Activated naive CD4-positive, alpha-beta T cell treated with anti-CD3 and anti-CD28 coated beads for 36 hours (primary cell): ENCODE measurements at regions of chr5 and their contacts with region 1.

Region 1: DNA sequence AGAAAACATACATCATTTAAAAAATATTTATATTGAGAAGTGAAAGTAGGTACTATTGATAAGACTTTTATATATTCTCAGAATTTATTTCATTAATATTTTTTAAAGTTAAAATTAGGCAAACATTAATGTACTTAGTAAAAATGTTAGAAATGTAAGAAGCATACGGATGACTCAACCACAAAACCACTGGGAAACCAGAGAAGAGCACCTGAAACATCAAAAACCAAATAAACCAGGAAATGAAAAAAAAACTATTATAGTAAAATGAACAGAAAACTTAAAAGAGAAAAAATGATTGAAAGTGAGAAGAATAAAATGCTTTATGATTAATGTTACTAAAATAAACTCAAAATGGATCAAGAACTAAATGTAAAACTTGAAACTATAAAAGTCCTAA is 233.2 kb upstream of the DAB2 start:
- DNase-seq: peak; percentile 11
- H3K4me3 Mint-ChIP-seq: no peak overlapping the region
- H3K27ac Mint-ChIP-seq: no peak overlapping the region
- H3K4me1 Mint-ChIP-seq: peaks cover 25% of the 10 kb centered on the region
- H3K27me3 Mint-ChIP-seq: peaks cover 14% of the 10 kb centered on the region

Region 2: GRCh38 chr5:39578887-39579497 is 79.0 kb before region 1 on chr5:
- CTCF ChIA-PET with region 1: no interaction called
- intact Hi-C with region 1: loop called (anchors 5 kb)
- DNase-seq: no peak
- H3K4me3 Mint-ChIP-seq: no peak overlapping the region
- H3K27ac Mint-ChIP-seq: no peak overlapping the region
- H3K4me1 Mint-ChIP-seq: peaks cover 8% of the 10 kb centered on the region
- H3K27me3 Mint-ChIP-seq: no peaks in the 10 kb centered on the region